Common myeloid progenitor, CD34-positive (primary cell): ENCODE measurements at regions of chr6 and their contacts with region 1.

Region 1: GRCh38 chr6:35457907-35458306 is 5.8 kb downstream of the FANCE start:
- DNase-seq: no peak
- H3K4me3 ChIP-seq: no peak overlapping the region
- H3K27ac ChIP-seq: no peak overlapping the region
- H3K4me1 ChIP-seq: peaks cover 6 to 18% (median 10%) of the 10 kb centered on the region in 4 experiments
- H3K27me3 ChIP-seq: no peaks in the 10 kb centered on the region

Region 2: DNA sequence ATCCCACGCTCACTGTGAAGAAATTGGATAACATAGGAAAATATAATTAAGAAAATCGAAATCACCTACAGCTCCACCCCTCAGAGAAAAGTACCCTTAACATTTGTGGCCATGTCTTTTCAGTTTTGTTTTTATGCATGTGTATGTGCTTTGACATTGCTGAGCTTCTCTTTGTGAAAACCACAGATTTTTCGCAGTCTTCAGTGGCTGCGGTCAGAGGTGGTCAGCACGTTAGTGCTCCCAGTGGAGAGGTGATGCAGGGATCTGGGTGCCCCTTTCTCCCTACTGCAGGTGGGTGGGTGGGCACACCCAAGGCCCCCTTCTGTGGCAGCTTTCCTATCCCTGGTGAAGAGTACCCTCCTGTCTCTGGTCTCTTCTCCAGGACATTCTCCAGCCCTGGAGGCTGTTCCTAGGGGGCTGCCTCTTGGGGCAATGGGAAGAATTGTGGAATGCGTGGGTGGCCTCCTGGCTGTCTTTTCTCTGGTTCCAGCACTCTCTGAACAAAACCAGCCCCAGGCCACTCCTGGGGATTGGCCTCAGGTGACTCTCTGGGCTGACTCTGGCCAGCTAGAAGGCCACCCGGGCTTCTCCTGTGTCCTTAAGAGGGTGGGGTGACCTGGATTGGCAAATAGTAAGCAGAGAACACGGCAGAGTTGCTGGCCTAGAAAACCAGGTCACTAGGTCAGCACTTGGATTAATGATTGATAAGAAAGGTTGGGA is 55.6 kb before region 1 on chr6:
- CTCF ChIA-PET with region 1: no interaction called
- POLR2A ChIA-PET with region 1: no interaction called
- DNase-seq: no peak
- H3K4me3 ChIP-seq: no peak overlapping the region
- H3K27ac ChIP-seq: no peak overlapping the region
- H3K4me1 ChIP-seq: no peaks in the 10 kb centered on the region
- H3K27me3 ChIP-seq: peaks cover 0 to 25% (median 0%) of the 10 kb centered on the region in 5 experiments

Region 3: GRCh38 chr6:35468181-35468979 is 10.5 kb after region 1 on chr6 and contains the start of gene RPL10A:
- CTCF ChIA-PET with region 1: interaction called, 10 read pairs
- POLR2A ChIA-PET with region 1: no interaction called
- DNase-seq: peak; percentile 97 to 99 (median 97)
- H3K4me3 ChIP-seq: peak within 1 kb of the TSS; percentile 73 to 97 (median 90)
- H3K27ac ChIP-seq: peak within 1 kb of the TSS; percentile 88 to 94
- H3K4me1 ChIP-seq: peaks cover 2 to 39% (median 30%) of the 10 kb centered on the region in 4 experiments
- H3K27me3 ChIP-seq: no peaks in the 10 kb centered on the region

Region 4: GRCh38 chr6:35483062-35483839 is 25.3 kb after region 1 on chr6:
- CTCF ChIA-PET with region 1: no interaction called
- POLR2A ChIA-PET with region 1: no interaction called
- DNase-seq: no peak
- H3K4me3 ChIP-seq: no peak overlapping the region
- H3K27ac ChIP-seq: no peak overlapping the region
- H3K4me1 ChIP-seq: peaks cover 0 to 45% (median 12%) of the 10 kb centered on the region in 4 experiments
- H3K27me3 ChIP-seq: no peaks in the 10 kb centered on the region